HCT116 (cell line): ENCODE measurements at regions of chr1 and their contacts with region 1.

Region 1: DNA sequence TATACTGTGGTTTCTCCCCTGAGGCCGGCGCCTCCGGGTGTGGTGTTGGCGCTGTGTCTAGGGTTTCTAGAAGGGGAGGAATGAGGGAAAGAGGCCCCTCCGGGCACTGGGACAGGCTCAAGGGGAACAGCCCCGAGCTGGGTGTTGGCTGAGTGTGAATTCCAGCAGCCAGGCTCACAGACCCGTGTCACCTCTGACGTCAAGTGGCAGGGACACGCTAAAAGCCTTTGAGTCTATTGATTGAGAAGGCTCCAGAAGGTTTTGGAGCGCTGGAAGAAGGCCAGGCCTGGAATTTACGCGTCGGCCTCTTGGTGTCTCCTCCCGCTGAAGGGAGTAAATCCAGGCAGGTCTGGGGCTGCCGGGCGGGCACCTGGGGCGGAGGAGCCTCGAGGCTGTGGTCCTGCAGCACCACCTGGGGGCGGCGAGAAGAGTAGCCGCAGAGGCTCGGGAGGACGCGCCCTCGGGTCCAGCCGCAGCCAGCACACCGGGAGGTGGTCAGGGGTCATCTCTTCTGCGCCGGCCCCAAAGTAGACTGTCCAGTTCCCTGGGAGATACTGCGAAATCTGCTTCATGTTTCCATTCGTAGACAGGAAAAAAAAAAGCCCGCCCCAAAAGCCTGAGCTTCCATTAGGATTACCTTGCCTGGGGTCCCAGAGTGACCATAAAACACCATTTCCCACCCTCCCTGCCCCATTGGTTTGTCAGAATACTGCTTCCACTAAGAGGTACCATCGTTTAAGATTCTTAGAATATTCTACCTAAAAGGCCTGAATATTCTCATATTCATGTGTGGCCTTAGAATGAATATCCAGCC is 61.7 kb downstream of the TLR5 start:
- DNase-seq: peak; percentile 97
- ATAC-seq: peak; percentile 99
- H3K4me3 ChIP-seq: peak overlapping the region in 1 of 2 experiments; percentile 21; a peak in 1 of 4 replicates
- H3K27ac ChIP-seq: peak overlapping the region; percentile 55
- H3K4me1 ChIP-seq: peaks cover 0 to 5% of the 10 kb centered on the region in 2 experiments; a peak in 2 of 4 replicates
- H3K27me3 ChIP-seq: no peaks in the 10 kb centered on the region
- CTCF ChIP-seq: peak; percentile 90 to 98 (median 91)
- POLR2A ChIP-seq: no peak
- RAD21 ChIP-seq: peak; percentile 100

Region 2: DNA sequence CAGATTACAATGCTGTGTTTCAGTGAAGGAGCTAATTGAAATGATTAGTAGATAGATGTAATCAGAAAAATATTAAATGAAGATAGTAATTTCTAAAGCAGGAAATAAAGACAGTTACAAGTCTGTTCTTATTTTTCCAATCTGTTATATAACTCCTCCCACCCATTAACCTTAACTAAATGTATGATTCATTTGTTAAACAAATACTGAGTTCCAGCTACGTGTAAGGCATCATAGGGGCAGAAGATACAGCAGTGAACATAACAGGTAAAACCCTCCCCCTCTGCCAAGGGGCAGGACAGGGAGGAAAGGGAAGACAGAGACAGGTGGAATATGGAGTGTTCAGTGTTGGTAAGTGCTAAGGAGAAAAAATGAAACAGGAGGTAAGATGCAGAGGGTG is 344.4 kb before region 1 on chr1 and contains the start of gene FAM177B:
- CTCF ChIA-PET with region 1: no interaction called
- POLR2A ChIA-PET with region 1: no interaction called
- RAD21 ChIA-PET with region 1: interaction called in 1 of 2 experiments, 3 read pairs
- intact Hi-C with region 1: loop called (anchors 1 kb)
- DNase-seq: no peak
- ATAC-seq: no peak
- H3K4me3 ChIP-seq: no peak within 1 kb of the TSS
- H3K27ac ChIP-seq: no peak within 1 kb of the TSS
- H3K4me1 ChIP-seq: no peaks in the 10 kb centered on the region
- H3K27me3 ChIP-seq: no peaks in the 10 kb centered on the region
- CTCF ChIP-seq: no peak
- POLR2A ChIP-seq: no peak
- RAD21 ChIP-seq: no peak
- total RNA-seq, gene FAM177B: not detected

Region 3: DNA sequence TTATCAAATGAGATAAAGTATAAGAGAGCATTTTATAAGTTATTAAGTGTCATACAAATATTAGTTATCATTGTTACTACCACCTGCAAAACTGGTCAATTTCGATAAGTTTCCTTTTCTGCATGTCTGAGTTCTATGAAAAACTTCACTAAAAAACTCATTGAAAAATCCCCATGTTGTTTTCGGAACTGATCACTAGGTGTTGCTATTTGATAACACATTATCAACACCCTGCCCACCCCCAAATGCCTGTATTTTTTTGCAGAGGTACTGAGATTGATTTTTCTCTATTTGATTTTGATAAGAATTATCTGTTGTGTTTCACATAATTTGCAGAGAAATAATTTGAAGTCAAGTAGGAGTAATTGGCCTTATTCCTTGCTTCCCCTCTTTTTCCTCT is 288.6 kb before region 1 on chr1:
- CTCF ChIA-PET with region 1: interaction called, 4 read pairs
- POLR2A ChIA-PET with region 1: no interaction called
- RAD21 ChIA-PET with region 1: no interaction called
- intact Hi-C with region 1: loop called (anchors 1 kb)
- DNase-seq: no peak
- ATAC-seq: peak; percentile 70
- H3K4me3 ChIP-seq: no peak overlapping the region
- H3K27ac ChIP-seq: no peak overlapping the region
- H3K4me1 ChIP-seq: no peaks in the 10 kb centered on the region
- H3K27me3 ChIP-seq: no peaks in the 10 kb centered on the region
- CTCF ChIP-seq: peak; percentile 29 to 88 (median 76); a peak in 5 of 6 replicates
- POLR2A ChIP-seq: no peak
- RAD21 ChIP-seq: peak; percentile 90